ENCODE measurements at regions of chr1 and their contacts with region 1.

Region 1: DNA sequence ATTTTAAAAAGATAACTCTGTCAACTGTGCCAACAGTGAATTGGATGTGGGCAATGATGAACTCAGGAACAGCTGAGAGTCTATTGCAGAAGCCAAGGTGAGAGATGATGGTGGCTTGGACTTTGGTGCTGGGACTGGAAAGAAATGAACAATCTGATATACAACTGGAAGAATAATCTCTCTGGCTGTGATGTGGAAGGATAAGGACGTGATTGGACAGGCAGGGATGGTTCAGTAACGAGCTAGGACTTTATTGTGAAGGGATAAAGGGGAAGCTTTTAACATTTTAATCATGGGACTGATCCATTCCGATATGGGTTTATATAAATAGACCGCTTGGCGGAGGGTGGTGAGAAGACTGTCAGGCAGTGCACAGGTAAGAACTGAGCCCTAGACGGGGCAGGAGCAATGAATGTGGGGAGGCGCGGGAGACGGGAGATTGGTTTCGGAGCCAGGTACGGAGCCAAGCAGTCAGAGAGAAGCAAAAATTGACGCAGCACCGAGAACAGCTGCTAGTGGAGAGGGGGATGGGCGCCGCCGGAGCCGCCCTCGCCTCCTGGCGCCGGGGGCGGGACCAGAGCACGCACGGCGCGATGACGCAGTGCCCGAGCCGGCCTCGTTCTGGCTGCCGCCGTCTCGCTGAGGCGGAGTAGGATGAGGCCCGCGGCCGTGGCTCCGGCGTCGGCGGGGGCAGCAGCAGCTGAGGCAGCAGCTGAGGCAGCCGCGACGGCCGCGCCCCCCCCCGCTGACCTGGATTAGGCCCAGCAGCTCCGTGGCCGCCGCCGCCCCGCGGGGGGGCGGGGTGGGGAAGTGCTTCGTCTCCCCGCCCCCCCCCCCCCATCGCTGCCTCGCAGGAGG is at the start of gene RNF11:
- DNase-seq: peak; percentile 95 to 98
- ATAC-seq: peak; percentile 97
- H3K4me3 ChIP-seq: peak within 1 kb of the TSS; percentile 51 to 98
- H3K27ac ChIP-seq: peak within 1 kb of the TSS; percentile 49 to 99
- H3K4me1 ChIP-seq: peaks cover 3 to 11% of the 10 kb centered on the region in 2 donors
- H3K27me3 ChIP-seq: no peaks in the 10 kb centered on the region
- total RNA-seq, gene RNF11: 116 to 151 TPM

Region 2: GRCh38 chr1:51019811-51020210 is 216.1 kb before region 1 on chr1:
- intact Hi-C with region 1: no loop called
- DNase-seq: no peak
- ATAC-seq: no peak
- H3K4me3 ChIP-seq: no peak overlapping the region
- H3K27ac ChIP-seq: no peak overlapping the region
- H3K4me1 ChIP-seq: no peaks in the 10 kb centered on the region
- H3K27me3 ChIP-seq: no peaks in the 10 kb centered on the region

Region 3: GRCh38 chr1:51284487-51284954 is 48.6 kb after region 1 on chr1:
- intact Hi-C with region 1: loop called in 1 of 2 experiments (anchors 5 kb)
- DNase-seq: no peak
- ATAC-seq: no peak
- H3K4me3 ChIP-seq: no peak overlapping the region
- H3K27ac ChIP-seq: no peak overlapping the region
- H3K4me1 ChIP-seq: peaks cover 8% of the 10 kb centered on the region in 2 donors
- H3K27me3 ChIP-seq: no peaks in the 10 kb centered on the region

Region 4: GRCh38 chr1:51296383-51297357 is 60.8 kb after region 1 on chr1:
- intact Hi-C with region 1: loop called (anchors 5 to 10 kb)
- DNase-seq: peak; percentile 87 to 95
- ATAC-seq: peak; percentile 91
- H3K4me3 ChIP-seq: peak overlapping the region; percentile 14 to 63
- H3K27ac ChIP-seq: no peak overlapping the region
- H3K4me1 ChIP-seq: no peaks in the 10 kb centered on the region
- H3K27me3 ChIP-seq: no peaks in the 10 kb centered on the region

Region 5: DNA sequence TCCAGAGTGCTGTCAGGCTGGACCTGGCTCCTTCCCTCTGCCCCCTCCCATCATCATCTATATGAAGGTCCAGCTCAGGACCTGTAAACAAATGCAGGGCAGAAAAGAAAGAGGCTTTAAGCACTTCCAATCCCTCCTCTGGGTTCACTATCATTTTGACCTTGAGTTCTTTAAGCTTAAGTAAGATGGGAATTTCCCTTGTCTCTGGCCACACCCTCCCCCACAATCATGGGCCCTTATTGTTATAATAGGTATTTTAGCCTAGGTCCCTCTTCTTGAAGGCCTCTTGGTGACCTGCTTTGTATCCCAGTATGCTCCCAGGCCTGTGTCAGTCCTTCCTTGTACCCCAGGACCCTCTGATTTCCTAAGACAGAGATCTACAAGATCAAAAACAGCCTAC is 328.2 kb after region 1 on chr1:
- intact Hi-C with region 1: no loop called
- DNase-seq: no peak
- ATAC-seq: no peak
- H3K4me3 ChIP-seq: no peak overlapping the region
- H3K27ac ChIP-seq: no peak overlapping the region
- H3K4me1 ChIP-seq: peaks cover 4% of the 10 kb centered on the region in 2 donors
- H3K27me3 ChIP-seq: no peaks in the 10 kb centered on the region

Measured in aorta (tissue), 5 donors.